Dorsolateral prefrontal cortex (tissue), 120 donors: ENCODE measurements at regions of chr1 and their contacts with region 1.

Region 1: GRCh38 chr1:40951943-40952743 is 27.4 kb upstream of the CTPS1 start:
- DNase-seq: peak; percentile 68 to 82 (median 73)
- H3K4me3 ChIP-seq: peak overlapping the region in 14 of 59 donors; percentile 2 to 43 (median 27)
- H3K27ac ChIP-seq: no peak overlapping the region
- H3K27me3 ChIP-seq: peaks cover 0 to 7% (median 0%) of the 10 kb centered on the region in 45 donors
- CTCF ChIP-seq: peak; percentile 62 to 99 (median 94)

Region 2: GRCh38 chr1:40606978-40607377 is 345.2 kb before region 1 on chr1:
- intact Hi-C with region 1: loop called (anchors 5 to 10 kb)
- DNase-seq: no peak
- H3K4me3 ChIP-seq: no peak overlapping the region
- H3K27ac ChIP-seq: no peak overlapping the region
- H3K27me3 ChIP-seq: no peaks in the 10 kb centered on the region
- CTCF ChIP-seq: no peak

Region 3: DNA sequence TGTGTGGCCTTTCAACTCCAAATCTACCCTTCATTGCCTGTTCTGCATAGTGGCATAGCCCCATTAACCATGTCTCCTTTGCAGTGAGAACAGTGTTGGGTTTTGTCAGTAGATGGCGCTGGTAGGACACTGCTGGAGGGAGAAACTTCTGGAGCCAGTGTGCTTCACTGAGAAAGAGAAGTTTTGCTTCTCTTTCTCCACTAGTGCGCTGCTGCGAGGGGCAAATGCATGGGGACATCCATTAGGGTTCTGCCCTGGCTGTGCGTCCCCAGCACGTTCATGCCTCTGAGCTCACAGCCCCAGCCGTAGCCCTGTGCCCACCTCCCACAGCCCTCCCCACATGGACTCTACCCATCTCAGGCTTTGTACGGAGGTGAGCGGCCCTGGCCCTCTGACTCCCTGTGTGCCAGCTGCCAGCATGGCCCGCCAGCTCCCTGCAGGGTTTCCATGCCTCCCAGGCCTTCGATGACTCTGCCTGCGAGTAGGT is 339.8 kb before region 1 on chr1:
- intact Hi-C with region 1: loop called (anchors 5 to 10 kb)
- DNase-seq: peak in 7 of 10 donors; percentile 54 to 76 (median 64)
- H3K4me3 ChIP-seq: peak overlapping the region in 5 of 59 donors; percentile 8 to 31 (median 21)
- H3K27ac ChIP-seq: peak overlapping the region in 18 of 59 donors; percentile 4 to 77 (median 44)
- H3K27me3 ChIP-seq: no peaks in the 10 kb centered on the region
- CTCF ChIP-seq: peak; percentile 46 to 92 (median 84)

Region 4: GRCh38 chr1:40774266-40774998 is 177.7 kb before region 1 on chr1:
- intact Hi-C with region 1: loop called (anchors 5 to 10 kb)
- DNase-seq: peak in 4 of 10 donors; percentile 38 to 51 (median 45)
- H3K4me3 ChIP-seq: no peak overlapping the region
- H3K27ac ChIP-seq: no peak overlapping the region
- H3K27me3 ChIP-seq: no peaks in the 10 kb centered on the region
- CTCF ChIP-seq: peak; percentile 39 to 83 (median 72)

Region 5: GRCh38 chr1:40862008-40862863 is 89.9 kb before region 1 on chr1 and contains the start of gene CITED4:
- intact Hi-C with region 1: loop called in 1 of 2 experiments (anchors 5 kb)
- DNase-seq: peak; percentile 92 to 96 (median 93)
- H3K4me3 ChIP-seq: peak within 1 kb of the TSS; percentile 46 to 92 (median 73)
- H3K27ac ChIP-seq: peak within 1 kb of the TSS in 34 of 59 donors; percentile 5 to 80 (median 52)
- H3K27me3 ChIP-seq: no peaks in the 10 kb centered on the region
- CTCF ChIP-seq: peak in 30 of 56 donors; percentile 6 to 50 (median 30)
- total RNA-seq, gene CITED4: 6.5 to 19.9 (median 12.1) TPM

Region 6: GRCh38 chr1:40919475-40920011 is 32.6 kb before region 1 on chr1:
- intact Hi-C with region 1: loop called in 1 of 2 experiments (anchors 2 kb)
- DNase-seq: peak; percentile 14 to 90 (median 82)
- H3K4me3 ChIP-seq: peak overlapping the region in 2 of 59 donors; percentile 12 to 13
- H3K27ac ChIP-seq: peak overlapping the region in 58 of 59 donors; percentile 53 to 96 (median 87)
- H3K27me3 ChIP-seq: no peaks in the 10 kb centered on the region
- CTCF ChIP-seq: peak in 2 of 56 donors; percentile 7 to 15

Region 7: GRCh38 chr1:41573785-41574713 is 621.9 kb after region 1 on chr1:
- intact Hi-C with region 1: no loop called
- DNase-seq: peak; percentile 74 to 90 (median 85)
- H3K4me3 ChIP-seq: peak overlapping the region in 1 of 59 donors; percentile 0
- H3K27ac ChIP-seq: peak overlapping the region in 9 of 59 donors; percentile 17 to 66 (median 41)
- H3K27me3 ChIP-seq: no peaks in the 10 kb centered on the region
- CTCF ChIP-seq: peak; percentile 50 to 97 (median 91)